PC-9 (cell line): ENCODE measurements at regions of chr4 and their contacts with region 1.

Region 1: DNA sequence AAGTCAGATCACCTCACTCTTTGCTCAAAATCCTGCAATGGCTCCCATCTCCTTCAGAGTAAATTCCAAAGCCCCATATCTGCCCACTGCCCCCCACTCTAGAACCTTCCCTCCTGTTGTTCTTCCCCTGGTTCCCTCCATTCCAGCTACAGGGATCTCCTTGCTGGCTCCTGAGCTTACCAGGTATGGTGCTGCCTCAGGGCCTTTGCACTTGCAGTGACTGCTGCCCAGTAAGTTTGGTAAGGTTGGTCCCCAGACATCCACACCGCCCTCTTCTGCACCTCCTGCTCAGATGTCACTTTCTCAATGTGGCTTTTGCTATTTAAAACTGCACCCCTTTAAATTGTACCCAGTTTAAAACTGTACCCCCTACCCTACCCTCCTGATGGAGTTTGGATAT is 7.8 kb upstream of the MAN2B2 start:
- DNase-seq: no peak
- H3K4me3 ChIP-seq: no peak overlapping the region
- H3K27ac ChIP-seq: no peak overlapping the region
- H3K4me1 ChIP-seq: peaks cover 13% of the 10 kb centered on the region
- H3K27me3 ChIP-seq: no peaks in the 10 kb centered on the region; the same call in 1 of the 2 replicates
- CTCF ChIP-seq: no peak

Region 2: GRCh38 chr4:6225469-6225868 is 341.7 kb before region 1 on chr4:
- CTCF ChIA-PET with region 1: no interaction called
- POLR2A ChIA-PET with region 1: no interaction called
- intact Hi-C with region 1: no loop called
- DNase-seq: peak in 1 of 2 experiments; percentile 25
- H3K4me3 ChIP-seq: no peak overlapping the region
- H3K27ac ChIP-seq: no peak overlapping the region
- H3K4me1 ChIP-seq: no peaks in the 10 kb centered on the region
- H3K27me3 ChIP-seq: peaks cover 16% of the 10 kb centered on the region
- CTCF ChIP-seq: no peak

Region 3: GRCh38 chr4:6382940-6383404 is 184.2 kb before region 1 on chr4:
- CTCF ChIA-PET with region 1: interaction called, 13 read pairs
- POLR2A ChIA-PET with region 1: no interaction called
- intact Hi-C with region 1: no loop called
- DNase-seq: no peak
- H3K4me3 ChIP-seq: no peak overlapping the region
- H3K27ac ChIP-seq: no peak overlapping the region
- H3K4me1 ChIP-seq: no peaks in the 10 kb centered on the region
- H3K27me3 ChIP-seq: no peaks in the 10 kb centered on the region
- CTCF ChIP-seq: no peak

Region 4: GRCh38 chr4:6461301-6462165 is 105.7 kb before region 1 on chr4:
- CTCF ChIA-PET with region 1: no interaction called
- POLR2A ChIA-PET with region 1: no interaction called
- intact Hi-C with region 1: no loop called
- DNase-seq: no peak
- H3K4me3 ChIP-seq: no peak overlapping the region
- H3K27ac ChIP-seq: no peak overlapping the region
- H3K4me1 ChIP-seq: no peaks in the 10 kb centered on the region
- H3K27me3 ChIP-seq: no peaks in the 10 kb centered on the region
- CTCF ChIP-seq: no peak

Region 5: GRCh38 chr4:6529021-6529420 is 38.2 kb before region 1 on chr4:
- CTCF ChIA-PET with region 1: no interaction called
- POLR2A ChIA-PET with region 1: no interaction called
- intact Hi-C with region 1: no loop called
- DNase-seq: no peak
- H3K4me3 ChIP-seq: no peak overlapping the region
- H3K27ac ChIP-seq: no peak overlapping the region
- H3K4me1 ChIP-seq: no peaks in the 10 kb centered on the region
- H3K27me3 ChIP-seq: no peaks in the 10 kb centered on the region
- CTCF ChIP-seq: no peak